Psoas muscle (tissue), 8 donors: ENCODE measurements at regions of chr1 and their contacts with region 1.

Region 1: GRCh38 chr1:153677718-153678505 is 576 bp upstream of the NPR1 start:
- DNase-seq: peak; percentile 49 to 70
- ATAC-seq: peak; percentile 63 to 86 (median 70)
- H3K4me3 ChIP-seq: peak overlapping the region; percentile 70
- H3K27ac ChIP-seq: no peak overlapping the region
- H3K4me1 ChIP-seq: no peaks in the 10 kb centered on the region
- H3K27me3 ChIP-seq: peaks cover 0 to 30% (median 9%) of the 10 kb centered on the region in 3 donors
- CTCF ChIP-seq: peak; percentile 86

Region 2: GRCh38 chr1:153646672-153647374 is 31.1 kb before region 1 on chr1:
- intact Hi-C with region 1: no loop called
- DNase-seq: no peak
- ATAC-seq: peak in 1 of 4 donors; percentile 0
- H3K4me3 ChIP-seq: no peak overlapping the region
- H3K27ac ChIP-seq: peak overlapping the region; percentile 43
- H3K4me1 ChIP-seq: peaks cover 55% of the 10 kb centered on the region
- H3K27me3 ChIP-seq: no peaks in the 10 kb centered on the region
- CTCF ChIP-seq: no peak

Region 3: GRCh38 chr1:153717330-153717729 is 39.4 kb after region 1 on chr1:
- intact Hi-C with region 1: loop called in 1 of 2 experiments (anchors 5 kb)
- DNase-seq: no peak
- ATAC-seq: no peak
- H3K4me3 ChIP-seq: no peak overlapping the region
- H3K27ac ChIP-seq: no peak overlapping the region
- H3K4me1 ChIP-seq: no peaks in the 10 kb centered on the region
- H3K27me3 ChIP-seq: no peaks in the 10 kb centered on the region
- CTCF ChIP-seq: no peak

Region 4: GRCh38 chr1:153749408-153750005 is 71.6 kb after region 1 on chr1:
- intact Hi-C with region 1: loop called (anchors 1 to 2 kb)
- DNase-seq: peak; percentile 86 to 92
- ATAC-seq: peak; percentile 95 to 97 (median 97)
- H3K4me3 ChIP-seq: no peak overlapping the region
- H3K27ac ChIP-seq: peak overlapping the region; percentile 41
- H3K4me1 ChIP-seq: peaks cover 38% of the 10 kb centered on the region
- H3K27me3 ChIP-seq: no peaks in the 10 kb centered on the region
- CTCF ChIP-seq: peak; percentile 97

Region 5: DNA sequence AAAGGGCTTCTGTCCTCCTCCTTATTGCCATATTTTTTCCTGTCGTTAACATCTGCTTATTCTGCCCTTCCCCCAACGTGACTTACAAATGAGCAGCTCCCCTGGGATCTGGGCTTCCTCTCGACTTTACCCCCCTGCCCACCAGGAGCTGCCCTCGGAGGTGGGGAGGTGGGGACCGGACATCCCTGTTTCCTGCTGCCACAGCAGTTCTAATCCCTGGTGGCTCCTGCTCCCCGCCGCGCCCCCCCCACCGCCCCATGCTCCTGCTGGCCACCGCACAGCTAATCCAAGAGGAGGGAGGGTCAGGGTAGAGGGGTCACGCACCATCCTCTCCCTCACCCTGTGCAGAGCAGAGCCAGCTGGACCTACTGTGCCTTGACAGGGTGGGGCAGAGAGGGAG is 92.9 kb after region 1 on chr1:
- intact Hi-C with region 1: loop called in 1 of 2 experiments (anchors 1 kb)
- DNase-seq: no peak
- ATAC-seq: no peak
- H3K4me3 ChIP-seq: no peak overlapping the region
- H3K27ac ChIP-seq: peak overlapping the region; percentile 41
- H3K4me1 ChIP-seq: peaks cover 8% of the 10 kb centered on the region
- H3K27me3 ChIP-seq: no peaks in the 10 kb centered on the region
- CTCF ChIP-seq: no peak

Region 6: DNA sequence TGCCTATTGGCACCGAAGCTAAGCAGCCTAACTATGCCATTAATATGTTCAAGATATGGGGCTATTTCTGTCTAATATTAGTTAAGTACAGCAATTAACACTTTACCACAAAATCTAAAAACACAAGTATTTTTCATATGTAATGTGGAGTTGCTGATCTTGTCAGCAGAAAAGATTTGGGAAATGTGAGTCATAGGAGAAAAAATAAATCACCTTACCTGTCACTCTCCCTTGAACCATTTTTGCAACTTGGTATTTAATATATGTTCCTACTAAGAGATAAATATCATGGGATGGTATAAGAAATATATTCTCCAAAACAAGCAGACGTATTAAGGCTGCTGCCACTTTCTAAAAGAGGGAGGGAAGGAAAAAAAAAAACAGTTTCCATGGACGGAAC is 460.0 kb after region 1 on chr1:
- intact Hi-C with region 1: no loop called
- DNase-seq: no peak
- ATAC-seq: no peak
- H3K4me3 ChIP-seq: no peak overlapping the region
- H3K27ac ChIP-seq: no peak overlapping the region
- H3K4me1 ChIP-seq: peaks cover 20% of the 10 kb centered on the region
- H3K27me3 ChIP-seq: no peaks in the 10 kb centered on the region
- CTCF ChIP-seq: no peak